ENCODE measurements at regions of chr5 and their contacts with region 1.

Region 1: DNA sequence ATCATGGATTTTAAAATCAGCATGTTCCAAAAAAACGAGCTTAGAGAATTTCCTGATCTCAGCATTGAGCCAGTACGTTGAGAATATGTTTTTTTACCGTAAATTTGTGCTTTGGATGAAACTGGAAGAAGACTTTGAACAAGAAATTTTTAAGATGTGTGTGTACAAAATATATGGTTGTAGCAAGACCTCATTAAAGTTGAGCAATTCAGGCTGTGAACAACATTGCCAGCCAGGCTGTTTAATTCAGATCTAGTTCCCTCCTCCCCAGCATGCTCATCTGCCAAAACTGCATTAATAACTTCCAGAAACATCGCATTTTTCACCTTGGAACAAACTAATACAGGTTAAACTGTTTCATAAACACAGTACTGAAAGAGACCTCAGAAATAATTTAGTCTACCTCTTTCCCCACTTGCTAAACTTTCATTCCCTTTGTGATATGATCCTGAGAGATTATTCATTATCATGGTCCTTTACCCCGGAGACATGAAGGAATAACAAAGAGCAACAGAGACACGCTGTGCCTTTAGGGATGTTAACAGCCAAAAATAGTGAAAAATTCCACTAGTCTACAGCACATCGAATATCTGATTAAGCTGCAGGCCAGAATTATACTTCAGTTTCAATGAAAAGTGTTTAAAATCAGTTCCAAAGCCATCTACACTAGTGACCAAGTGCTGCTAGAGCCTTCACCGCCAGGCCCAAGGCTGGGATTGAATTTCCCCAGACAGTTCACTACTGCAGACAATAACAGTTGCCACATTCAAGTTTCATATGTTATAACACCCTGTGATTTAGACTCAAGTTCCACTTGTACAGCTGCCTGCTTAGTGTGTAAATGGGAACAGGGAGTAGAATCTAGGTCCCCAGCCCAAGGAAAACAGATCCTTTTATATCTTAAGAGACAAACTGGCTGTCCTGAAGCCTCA is 89.6 kb downstream of the EFNA5 start:
- DNase-seq: peak; percentile 80
- H3K4me3 Mint-ChIP-seq: peak overlapping the region; percentile 61
- H3K27ac Mint-ChIP-seq: peak overlapping the region; percentile 74
- H3K4me1 Mint-ChIP-seq: peaks cover 42% of the 10 kb centered on the region
- H3K27me3 Mint-ChIP-seq: no peaks in the 10 kb centered on the region
- CTCF ChIP-seq: no peak

Region 2: GRCh38 chr5:107389130-107389774 is 191.9 kb before region 1 on chr5:
- CTCF ChIA-PET with region 1: interaction called, 3 read pairs
- POLR2A ChIA-PET with region 1: interaction called, 10 read pairs
- intact Hi-C with region 1: no loop called
- DNase-seq: peak; percentile 67
- H3K4me3 Mint-ChIP-seq: no peak overlapping the region
- H3K27ac Mint-ChIP-seq: peak overlapping the region; percentile 75
- H3K4me1 Mint-ChIP-seq: peaks cover 45% of the 10 kb centered on the region
- H3K27me3 Mint-ChIP-seq: no peaks in the 10 kb centered on the region
- CTCF ChIP-seq: no peak

Region 3: GRCh38 chr5:107469485-107470294 is 111.5 kb before region 1 on chr5:
- CTCF ChIA-PET with region 1: no interaction called
- POLR2A ChIA-PET with region 1: interaction called, 12 read pairs
- intact Hi-C with region 1: no loop called
- DNase-seq: peak; percentile 94
- H3K4me3 Mint-ChIP-seq: peak overlapping the region; percentile 47
- H3K27ac Mint-ChIP-seq: peak overlapping the region; percentile 93
- H3K4me1 Mint-ChIP-seq: peaks cover 77% of the 10 kb centered on the region
- H3K27me3 Mint-ChIP-seq: no peaks in the 10 kb centered on the region
- CTCF ChIP-seq: no peak

Region 4: GRCh38 chr5:107564896-107565512 is 16.2 kb before region 1 on chr5:
- CTCF ChIA-PET with region 1: interaction called, 3 read pairs
- POLR2A ChIA-PET with region 1: interaction called, 12 read pairs
- intact Hi-C with region 1: no loop called
- DNase-seq: no peak
- H3K4me3 Mint-ChIP-seq: peak overlapping the region; percentile 65
- H3K27ac Mint-ChIP-seq: peak overlapping the region; percentile 95
- H3K4me1 Mint-ChIP-seq: peaks cover 47% of the 10 kb centered on the region
- H3K27me3 Mint-ChIP-seq: no peaks in the 10 kb centered on the region
- CTCF ChIP-seq: no peak

Region 5: GRCh38 chr5:107604832-107605389 is 23.8 kb after region 1 on chr5:
- CTCF ChIA-PET with region 1: interaction called, 4 read pairs
- POLR2A ChIA-PET with region 1: interaction called, 17 read pairs
- intact Hi-C with region 1: no loop called
- DNase-seq: no peak
- H3K4me3 Mint-ChIP-seq: no peak overlapping the region
- H3K27ac Mint-ChIP-seq: no peak overlapping the region
- H3K4me1 Mint-ChIP-seq: peaks cover 41% of the 10 kb centered on the region
- H3K27me3 Mint-ChIP-seq: no peaks in the 10 kb centered on the region
- CTCF ChIP-seq: no peak

Region 6: DNA sequence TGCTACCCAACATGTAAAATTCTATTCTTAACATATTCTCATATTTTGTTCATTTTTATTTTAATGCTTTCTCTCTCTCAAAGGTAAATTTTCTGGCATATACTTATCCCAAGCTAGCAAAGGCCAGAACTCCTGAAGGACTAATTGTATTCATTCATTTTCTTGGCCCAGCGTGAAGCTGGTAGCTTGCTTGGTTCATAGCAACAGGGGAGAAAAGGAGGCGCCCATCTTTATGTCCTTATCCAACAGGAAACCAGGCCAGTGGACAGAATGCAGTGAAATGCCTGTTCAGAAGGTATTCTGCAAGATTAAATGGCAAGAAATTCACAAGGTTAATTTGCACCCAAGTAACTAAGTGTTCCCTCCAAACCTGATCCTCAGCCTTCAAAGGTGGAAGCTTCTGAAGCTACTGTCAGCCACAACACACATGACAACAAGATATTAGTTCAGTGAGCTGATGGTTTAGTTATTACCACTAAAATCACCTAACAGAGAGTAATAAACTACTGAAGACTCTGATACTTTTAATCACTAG is 83.9 kb after region 1 on chr5:
- CTCF ChIA-PET with region 1: interaction called, 4 read pairs
- POLR2A ChIA-PET with region 1: interaction called, 205 read pairs
- intact Hi-C with region 1: no loop called
- DNase-seq: no peak
- H3K4me3 Mint-ChIP-seq: peak overlapping the region; percentile 21
- H3K27ac Mint-ChIP-seq: peak overlapping the region; percentile 26
- H3K4me1 Mint-ChIP-seq: peaks cover 26% of the 10 kb centered on the region
- H3K27me3 Mint-ChIP-seq: no peaks in the 10 kb centered on the region
- CTCF ChIP-seq: no peak